A673 (cell line): ENCODE measurements at regions of chr11 and their contacts with region 1.

Region 1: GRCh38 chr11:134223836-134224709 is at the starts of genes NCAPD3 and VPS26B:
- DNase-seq: peak; percentile 99
- H3K4me3 ChIP-seq: peak within 1 kb of the TSS; percentile 65
- H3K27ac ChIP-seq: peak within 1 kb of the TSS; percentile 79
- H3K4me1 ChIP-seq: peaks cover 12% of the 10 kb centered on the region
- H3K27me3 ChIP-seq: no peaks in the 10 kb centered on the region
- CTCF ChIP-seq: no peak
- total RNA-seq, gene NCAPD3: 120 and 127 TPM in 2 replicates
- total RNA-seq, gene VPS26B: 51.3 and 53.3 TPM in 2 replicates

Region 2: DNA sequence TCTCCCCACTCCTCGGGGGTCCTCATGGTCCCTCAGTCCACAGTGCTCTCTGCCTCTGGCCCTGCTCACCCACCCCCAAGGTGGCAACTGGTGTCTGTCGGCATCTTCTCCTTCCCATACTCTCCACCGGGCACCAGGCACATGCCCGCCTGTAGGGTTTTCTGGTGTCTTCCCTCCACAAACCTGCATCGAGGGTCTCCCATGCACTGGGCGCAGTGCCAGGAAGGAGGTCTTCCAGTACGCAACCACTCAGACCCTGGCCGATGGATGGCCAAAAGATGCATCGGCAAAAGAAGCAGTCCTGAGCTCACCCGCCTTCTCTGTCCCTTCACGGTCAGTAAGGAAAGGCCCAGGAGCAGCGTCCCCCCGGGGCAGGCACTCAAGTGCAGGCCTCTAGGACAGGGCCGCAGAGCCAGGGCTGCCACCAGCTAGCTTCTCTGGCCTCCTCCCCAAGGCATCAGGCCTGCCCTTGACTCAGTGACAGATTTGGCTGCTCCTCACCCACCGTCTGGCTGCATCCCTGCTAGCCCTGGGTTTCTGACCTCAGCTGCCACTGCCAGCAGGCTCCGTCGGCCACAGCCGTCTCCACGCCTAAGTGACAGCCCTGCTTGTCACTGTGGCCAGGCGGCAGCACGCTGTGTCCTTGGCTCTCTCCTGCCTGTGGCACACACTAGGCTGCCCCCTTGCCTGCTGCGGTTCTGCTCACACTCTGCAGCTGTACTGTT is 235.2 kb before region 1 on chr11:
- CTCF ChIA-PET with region 1: no interaction called
- POLR2A ChIA-PET with region 1: no interaction called
- intact Hi-C with region 1: no loop called
- DNase-seq: no peak
- H3K4me3 ChIP-seq: no peak overlapping the region
- H3K27ac ChIP-seq: no peak overlapping the region
- H3K4me1 ChIP-seq: peaks cover 15% of the 10 kb centered on the region
- H3K27me3 ChIP-seq: no peaks in the 10 kb centered on the region
- CTCF ChIP-seq: no peak

Region 3: DNA sequence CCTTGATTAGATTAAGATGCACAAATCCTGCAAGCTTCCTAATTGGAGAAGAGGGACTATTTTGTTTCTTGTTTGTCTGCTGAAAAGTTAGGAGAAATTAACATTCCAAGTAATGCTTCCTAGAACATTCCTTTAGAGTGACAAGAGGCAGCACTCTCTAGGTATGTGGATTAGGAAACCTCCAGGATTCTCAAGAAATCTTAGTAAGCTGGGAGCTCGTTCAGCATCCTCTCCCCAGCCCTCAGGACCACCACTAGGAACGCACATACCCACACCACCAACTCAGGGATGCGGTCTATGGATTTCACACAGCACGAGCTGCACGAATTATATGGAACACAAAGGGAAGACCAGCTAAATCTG is 53.2 kb before region 1 on chr11:
- CTCF ChIA-PET with region 1: no interaction called
- POLR2A ChIA-PET with region 1: no interaction called
- intact Hi-C with region 1: no loop called
- DNase-seq: no peak
- H3K4me3 ChIP-seq: no peak overlapping the region
- H3K27ac ChIP-seq: no peak overlapping the region
- H3K4me1 ChIP-seq: no peaks in the 10 kb centered on the region
- H3K27me3 ChIP-seq: no peaks in the 10 kb centered on the region
- CTCF ChIP-seq: no peak

Region 4: DNA sequence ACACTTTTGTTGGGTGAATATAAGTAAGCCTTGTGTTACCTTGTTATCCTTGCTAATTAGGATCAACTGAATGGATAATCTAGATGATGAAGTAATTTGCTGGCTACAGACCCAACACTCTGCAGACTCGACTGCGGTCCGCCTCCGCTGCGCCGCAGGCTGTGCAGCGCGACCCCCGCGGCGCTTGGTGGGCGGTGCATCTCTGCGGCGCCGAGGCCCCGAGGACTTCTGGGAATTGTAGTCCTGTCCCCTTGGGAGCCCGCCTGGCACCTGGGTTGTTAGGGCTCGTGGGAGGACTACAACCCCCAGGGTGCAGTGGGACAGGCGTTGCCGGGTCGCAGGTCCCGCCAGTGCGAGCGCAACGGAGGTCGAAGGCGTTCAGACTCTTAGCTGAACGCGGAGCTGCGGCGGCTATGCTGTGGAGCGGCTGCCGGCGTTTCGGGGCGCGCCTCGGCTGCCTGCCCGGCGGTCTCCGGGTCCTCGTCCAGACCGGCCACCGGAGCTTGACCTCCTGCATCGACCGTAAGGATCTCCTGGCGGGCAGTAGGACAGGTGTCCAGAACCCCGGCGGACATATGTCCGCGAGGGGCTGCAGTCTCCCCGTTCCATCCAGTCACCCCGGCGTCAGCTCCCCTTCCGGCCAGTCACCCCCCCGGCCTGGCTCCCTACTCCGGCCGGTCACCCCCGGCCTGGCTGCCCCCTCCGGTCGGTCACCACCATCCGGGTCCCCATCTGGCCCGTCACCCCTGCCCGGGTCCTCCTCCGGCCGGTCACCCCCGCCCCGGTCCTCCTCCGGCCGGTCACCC is 29.3 kb after region 1 on chr11 and contains the starts of genes ACAD8 and THYN1:
- CTCF ChIA-PET with region 1: no interaction called
- POLR2A ChIA-PET with region 1: no interaction called
- intact Hi-C with region 1: loop called (anchors 2 kb)
- DNase-seq: peak; percentile 99
- H3K4me3 ChIP-seq: peak within 1 kb of the TSS; percentile 55
- H3K27ac ChIP-seq: peak within 1 kb of the TSS; percentile 67
- H3K4me1 ChIP-seq: peaks cover 10% of the 10 kb centered on the region
- H3K27me3 ChIP-seq: no peaks in the 10 kb centered on the region
- CTCF ChIP-seq: no peak
- total RNA-seq, gene ACAD8: 32.3 and 34.8 TPM in 2 replicates
- total RNA-seq, gene THYN1: 57.2 and 60.2 TPM in 2 replicates

Region 5: GRCh38 chr11:134331354-134332188 is 107.5 kb after region 1 on chr11 and contains the start of gene GLB1L2:
- CTCF ChIA-PET with region 1: no interaction called
- POLR2A ChIA-PET with region 1: no interaction called
- intact Hi-C with region 1: no loop called
- DNase-seq: peak; percentile 87
- H3K4me3 ChIP-seq: peak within 1 kb of the TSS; percentile 53
- H3K27ac ChIP-seq: no peak within 1 kb of the TSS
- H3K4me1 ChIP-seq: peaks cover 10% of the 10 kb centered on the region
- H3K27me3 ChIP-seq: no peaks in the 10 kb centered on the region
- CTCF ChIP-seq: no peak
- total RNA-seq, gene GLB1L2: 21.7 and 22.6 TPM in 2 replicates